H1 (cell line): ENCODE measurements at regions of chr15 and their contacts with region 1.

Region 1: DNA sequence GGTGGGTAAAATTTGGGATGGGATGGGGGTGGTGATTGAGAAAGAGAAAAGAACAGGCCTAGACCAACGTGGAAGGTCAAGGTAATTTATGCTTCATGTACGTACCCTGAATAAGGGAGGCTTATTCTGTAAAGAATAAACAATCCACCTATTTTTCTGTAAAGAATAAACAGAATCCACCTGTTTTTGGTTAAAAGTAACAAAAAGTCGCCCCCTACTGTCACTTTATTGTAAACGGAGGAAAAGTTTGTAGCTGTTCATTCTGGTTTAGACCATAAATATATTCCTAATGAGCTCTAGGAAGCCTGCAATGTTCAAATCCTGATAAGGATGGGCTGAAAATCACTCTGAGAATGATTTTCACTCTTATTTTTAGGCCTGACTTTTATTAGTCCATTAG is 23.5 kb upstream of the SQOR start:
- DNase-seq: no peak
- H3K4me3 ChIP-seq: no peak overlapping the region
- H3K27ac ChIP-seq: no peak overlapping the region
- H3K4me1 ChIP-seq: no peaks in the 10 kb centered on the region
- H3K27me3 ChIP-seq: no peaks in the 10 kb centered on the region
- CTCF ChIP-seq: peak in 1 of 3 experiments; percentile 38; a peak in 2 of 4 replicates
- EP300 ChIP-seq: no peak
- POLR2A ChIP-seq: no peak
- RAD21 ChIP-seq: peak; percentile 29 to 34; a peak in 2 of 4 replicates

Region 2: DNA sequence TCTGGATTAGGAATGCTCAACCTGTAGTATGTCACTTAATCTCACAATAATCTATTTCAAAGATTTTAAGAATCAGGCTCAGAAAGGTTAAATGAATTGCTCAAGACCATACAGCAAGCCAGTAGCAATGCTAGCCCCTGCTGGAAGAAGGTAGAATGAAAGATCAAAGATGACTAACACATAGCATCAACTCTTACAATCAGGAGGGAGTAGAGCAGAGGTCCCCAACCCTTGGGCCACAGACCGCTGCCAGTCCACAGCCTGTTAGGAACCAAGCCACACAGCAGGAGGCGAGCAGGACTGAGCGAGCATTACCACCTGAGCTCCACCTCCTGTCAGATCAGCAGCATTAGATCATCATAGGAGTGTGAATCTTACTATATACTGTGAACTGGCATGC is 217.5 kb before region 1 on chr15:
- CTCF ChIA-PET with region 1: no interaction called
- POLR2A ChIA-PET with region 1: no interaction called
- DNase-seq: no peak
- H3K4me3 ChIP-seq: no peak overlapping the region
- H3K27ac ChIP-seq: no peak overlapping the region
- H3K4me1 ChIP-seq: no peaks in the 10 kb centered on the region
- H3K27me3 ChIP-seq: peaks cover 0 to 5% (median 0%) of the 10 kb centered on the region in 4 experiments; a peak in 2 of 7 replicates
- CTCF ChIP-seq: peak in 2 of 3 experiments; percentile 12 to 30; a peak in 2 of 4 replicates
- EP300 ChIP-seq: no peak
- POLR2A ChIP-seq: no peak
- RAD21 ChIP-seq: peak; percentile 30

Region 3: GRCh38 chr15:45587095-45587860 is 24.0 kb before region 1 on chr15 and contains the start of gene BLOC1S6:
- CTCF ChIA-PET with region 1: interaction called, 11 read pairs
- POLR2A ChIA-PET with region 1: interaction called, 15 read pairs
- DNase-seq: peak; percentile 84 to 94
- H3K4me3 ChIP-seq: peak within 1 kb of the TSS; percentile 79 to 87 (median 83)
- H3K27ac ChIP-seq: peak within 1 kb of the TSS; percentile 98
- H3K4me1 ChIP-seq: peaks cover 3 to 12% (median 7%) of the 10 kb centered on the region in 4 experiments; a peak in 4 of 7 replicates
- H3K27me3 ChIP-seq: no peaks in the 10 kb centered on the region
- CTCF ChIP-seq: no peak
- EP300 ChIP-seq: peak in 1 of 2 experiments; percentile 59; a peak in 1 of 3 replicates
- POLR2A ChIP-seq: peak; percentile 59 to 97
- RAD21 ChIP-seq: no peak
- total RNA-seq, gene BLOC1S6: 28.7 and 28.8 TPM in 2 replicates

Region 4: DNA sequence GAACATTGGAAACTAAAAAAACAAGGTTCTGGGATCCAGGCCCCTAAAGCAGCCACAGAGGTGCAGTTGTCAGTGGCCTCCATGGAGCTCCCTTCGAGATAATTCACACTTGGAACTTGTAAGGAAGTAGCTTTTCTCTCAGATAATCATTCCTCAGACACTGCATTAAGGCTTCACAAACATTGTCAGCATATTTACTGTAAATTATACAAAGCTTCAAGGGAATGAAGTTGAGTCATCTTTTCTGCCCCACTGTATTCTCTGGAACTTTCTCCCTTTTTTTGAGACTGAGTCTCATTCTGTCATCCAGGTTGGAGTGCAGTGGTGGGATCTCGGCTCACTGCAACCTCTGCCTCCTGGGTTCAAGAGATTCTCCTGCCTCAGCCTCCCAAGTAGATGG is 17.0 kb before region 1 on chr15:
- CTCF ChIA-PET with region 1: interaction called, 10 read pairs
- POLR2A ChIA-PET with region 1: interaction called, 3 read pairs
- DNase-seq: no peak
- H3K4me3 ChIP-seq: no peak overlapping the region
- H3K27ac ChIP-seq: no peak overlapping the region
- H3K4me1 ChIP-seq: no peaks in the 10 kb centered on the region
- H3K27me3 ChIP-seq: no peaks in the 10 kb centered on the region
- CTCF ChIP-seq: no peak
- EP300 ChIP-seq: no peak
- POLR2A ChIP-seq: no peak
- RAD21 ChIP-seq: no peak